HEK293T (cell line): ENCODE measurements at regions of chr6 and their contacts with region 1.

Region 1: DNA sequence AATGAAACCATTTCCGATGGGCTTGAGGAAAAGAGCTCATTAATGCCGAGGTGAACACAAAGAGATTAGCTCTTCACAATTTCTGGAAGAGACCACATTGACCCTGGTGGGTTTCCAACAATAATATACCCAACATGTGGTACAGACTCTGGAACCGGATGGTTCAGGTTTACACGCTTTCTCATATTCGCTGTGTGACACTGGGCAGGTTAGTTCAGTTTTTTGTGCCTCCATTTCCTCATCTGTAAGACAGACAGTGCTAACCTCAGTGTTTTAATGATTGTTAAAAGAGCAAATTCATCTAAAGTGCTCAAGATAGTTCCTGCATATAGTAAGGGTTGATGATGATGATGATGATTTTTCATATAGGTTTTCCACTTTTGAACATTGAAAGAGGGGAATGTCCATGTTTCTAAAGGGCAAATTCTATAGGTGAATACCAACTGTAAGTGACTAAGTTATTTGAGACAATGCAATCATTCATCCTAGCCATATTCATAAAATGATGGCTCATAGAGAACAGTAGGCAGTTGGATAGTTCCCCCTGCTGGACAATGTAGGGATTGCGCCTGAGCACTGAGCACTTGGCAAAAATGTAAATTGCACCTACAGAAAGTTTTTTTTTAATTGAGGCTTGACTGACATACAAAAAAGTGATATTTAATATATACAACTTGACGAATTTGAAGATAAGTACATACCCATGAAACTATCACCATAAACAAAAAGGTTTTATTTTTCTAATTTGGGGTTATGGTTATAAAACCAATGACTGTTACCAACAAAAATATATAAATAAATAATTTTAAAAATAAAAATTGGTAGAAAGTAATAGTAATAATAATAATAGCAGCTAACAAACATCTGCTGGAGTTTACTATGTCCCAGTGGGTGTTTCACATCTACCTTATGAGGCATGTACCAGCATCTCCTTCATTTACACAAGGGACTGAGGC is 2.1 kb upstream of the PERP start:
- DNase-seq: peak; percentile 54

Region 2: GRCh38 chr6:138004423-138005287 is 104.7 kb before region 1 on chr6:
- CTCF ChIA-PET with region 1: interaction called, 27 read pairs
- POLR2A ChIA-PET with region 1: interaction called, 14 read pairs
- DNase-seq: peak; percentile 43

Region 3: GRCh38 chr6:138088330-138088766 is 21.0 kb before region 1 on chr6:
- CTCF ChIA-PET with region 1: interaction called, 5 read pairs
- POLR2A ChIA-PET with region 1: interaction called, 11 read pairs
- DNase-seq: no peak